ENCODE measurements at regions of chr5 and their contacts with region 1.

Region 1: DNA sequence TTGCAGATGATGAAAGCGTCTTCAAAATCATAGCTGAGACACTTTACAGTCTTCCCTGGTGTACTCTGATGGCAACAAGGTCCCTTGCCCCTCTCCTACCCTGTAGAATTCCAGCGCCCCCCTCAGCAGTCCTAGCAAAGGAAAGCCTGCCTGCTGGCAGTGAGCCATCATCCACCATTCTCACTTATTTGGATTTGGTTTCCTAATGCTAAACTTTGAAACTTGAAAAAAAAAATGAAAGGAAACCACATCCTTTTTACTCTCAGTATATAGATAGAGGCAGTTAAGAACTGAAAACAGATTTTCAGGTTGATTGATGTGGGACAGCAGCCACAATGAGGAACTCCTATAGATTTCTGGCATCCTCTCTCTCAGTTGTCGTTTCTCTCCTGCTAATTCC is at the start of gene GZMA:
- DNase-seq: peak in 8 of 9 donors; percentile 47 to 86 (median 80)
- ATAC-seq: peak; percentile 87
- H3K4me3 ChIP-seq: peak within 1 kb of the TSS; percentile 66
- H3K4me3 Mint-ChIP-seq: peak within 1 kb of the TSS; percentile 83 to 93 (median 89)
- H3K27ac ChIP-seq: peak within 1 kb of the TSS; percentile 21
- H3K27ac Mint-ChIP-seq: peak within 1 kb of the TSS; percentile 77 to 93 (median 90)
- H3K4me1 ChIP-seq: peaks cover 42 to 47% of the 10 kb centered on the region in 2 donors
- H3K4me1 Mint-ChIP-seq: peaks cover 44 to 92% (median 80%) of the 10 kb centered on the region in 7 donors
- H3K27me3 ChIP-seq: no peaks in the 10 kb centered on the region
- H3K27me3 Mint-ChIP-seq: no peaks in the 10 kb centered on the region
- total RNA-seq, gene GZMA: 2.0 to 1,076 (median 10.9) TPM

Region 2: DNA sequence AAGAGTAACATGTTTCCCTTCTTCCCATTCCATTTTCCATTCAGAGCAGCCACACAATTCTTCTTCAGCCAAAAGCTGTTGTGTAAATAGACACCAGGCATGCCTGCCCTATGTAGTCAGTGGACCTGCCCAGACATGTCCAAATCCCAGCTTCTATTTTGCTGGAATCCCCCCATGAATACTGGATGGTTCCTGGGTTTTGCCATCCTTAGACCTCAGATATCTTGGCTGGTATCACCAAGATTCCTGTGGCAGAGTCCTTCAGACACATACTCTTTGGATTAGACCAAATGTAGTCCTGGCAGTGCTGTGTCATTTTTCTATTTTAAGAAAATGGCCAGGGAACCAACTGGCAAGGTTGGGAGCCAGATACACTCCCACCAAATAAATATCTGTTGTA is 1611.6 kb before region 1 on chr5:
- CTCF ChIA-PET with region 1: no interaction called
- POLR2A ChIA-PET with region 1: no interaction called
- intact Hi-C with region 1: no loop called
- DNase-seq: no peak
- ATAC-seq: no peak
- H3K4me3 ChIP-seq: no peak overlapping the region
- H3K4me3 Mint-ChIP-seq: no peak overlapping the region
- H3K27ac ChIP-seq: no peak overlapping the region
- H3K27ac Mint-ChIP-seq: no peak overlapping the region
- H3K4me1 ChIP-seq: no peaks in the 10 kb centered on the region
- H3K4me1 Mint-ChIP-seq: peaks cover 0 to 1% (median 0%) of the 10 kb centered on the region in 7 donors
- H3K27me3 ChIP-seq: no peaks in the 10 kb centered on the region
- H3K27me3 Mint-ChIP-seq: peaks cover 20 to 58% (median 45%) of the 10 kb centered on the region in 5 donors

Region 3: GRCh38 chr5:54905943-54906537 is 196.3 kb before region 1 on chr5:
- CTCF ChIA-PET with region 1: interaction called, 4 read pairs
- POLR2A ChIA-PET with region 1: no interaction called
- intact Hi-C with region 1: loop called (anchors 1 to 2 kb)
- DNase-seq: peak; percentile 26 to 65 (median 53)
- ATAC-seq: peak; percentile 55
- H3K4me3 ChIP-seq: no peak overlapping the region
- H3K4me3 Mint-ChIP-seq: no peak overlapping the region
- H3K27ac ChIP-seq: no peak overlapping the region
- H3K27ac Mint-ChIP-seq: no peak overlapping the region
- H3K4me1 ChIP-seq: peaks cover 0 to 10% of the 10 kb centered on the region in 2 donors
- H3K4me1 Mint-ChIP-seq: peaks cover 6 to 64% (median 10%) of the 10 kb centered on the region in 7 donors
- H3K27me3 ChIP-seq: no peaks in the 10 kb centered on the region
- H3K27me3 Mint-ChIP-seq: peaks cover 0 to 51% (median 6%) of the 10 kb centered on the region in 5 donors

Region 4: GRCh38 chr5:54985301-54986268 is 116.8 kb before region 1 on chr5 and contains the start of gene ESM1:
- CTCF ChIA-PET with region 1: no interaction called
- POLR2A ChIA-PET with region 1: no interaction called
- intact Hi-C with region 1: loop called in 1 of 2 experiments (anchors 5 kb)
- DNase-seq: peak in 1 of 9 donors; percentile 5
- ATAC-seq: peak; percentile 36
- H3K4me3 ChIP-seq: no peak within 1 kb of the TSS
- H3K4me3 Mint-ChIP-seq: peak within 1 kb of the TSS; percentile 11 to 68 (median 47)
- H3K27ac ChIP-seq: no peak within 1 kb of the TSS
- H3K27ac Mint-ChIP-seq: peak within 1 kb of the TSS in 2 of 9 donors; percentile 52 to 77
- H3K4me1 ChIP-seq: peaks cover 15 to 37% of the 10 kb centered on the region in 2 donors
- H3K4me1 Mint-ChIP-seq: peaks cover 18 to 65% (median 54%) of the 10 kb centered on the region in 7 donors
- H3K27me3 ChIP-seq: no peaks in the 10 kb centered on the region
- H3K27me3 Mint-ChIP-seq: peaks cover 0 to 36% (median 4%) of the 10 kb centered on the region in 5 donors
- total RNA-seq, gene ESM1: 0.39 to 1.2 TPM in 2 of 5 experiments, not detected in the others

Region 5: GRCh38 chr5:55037046-55037771 is 65.1 kb before region 1 on chr5:
- CTCF ChIA-PET with region 1: interaction called, 10 read pairs
- POLR2A ChIA-PET with region 1: interaction called, 11 read pairs
- intact Hi-C with region 1: loop called (anchors 1 to 2 kb)
- DNase-seq: peak in 8 of 9 donors; percentile 10 to 69 (median 50)
- ATAC-seq: peak; percentile 89
- H3K4me3 ChIP-seq: no peak overlapping the region
- H3K4me3 Mint-ChIP-seq: peak overlapping the region; percentile 6 to 55 (median 48)
- H3K27ac ChIP-seq: peak overlapping the region; percentile 49
- H3K27ac Mint-ChIP-seq: peak overlapping the region; percentile 55 to 99 (median 86)
- H3K4me1 ChIP-seq: peaks cover 17 to 31% of the 10 kb centered on the region in 2 donors
- H3K4me1 Mint-ChIP-seq: peaks cover 11 to 53% (median 32%) of the 10 kb centered on the region in 7 donors
- H3K27me3 ChIP-seq: no peaks in the 10 kb centered on the region
- H3K27me3 Mint-ChIP-seq: no peaks in the 10 kb centered on the region

Region 6: DNA sequence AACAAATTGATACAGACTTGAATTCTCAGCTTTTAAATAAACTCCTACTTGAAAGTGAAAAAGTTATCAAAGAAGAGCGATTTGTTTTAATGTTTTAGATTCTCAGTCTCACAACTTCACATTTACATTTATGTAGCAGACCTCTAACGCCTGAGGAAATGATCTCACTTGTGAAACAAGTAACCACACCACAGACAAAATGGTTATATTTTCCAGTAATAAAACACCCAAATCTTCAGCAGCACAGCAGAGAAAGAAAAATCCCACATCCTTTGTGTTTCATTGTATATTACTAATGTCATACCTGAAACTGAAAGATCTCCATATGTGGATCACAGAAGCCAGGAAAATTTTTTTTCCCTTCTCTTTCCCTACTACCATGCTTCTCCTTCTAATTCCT is 29.7 kb before region 1 on chr5:
- CTCF ChIA-PET with region 1: interaction called, 3 read pairs
- POLR2A ChIA-PET with region 1: interaction called, 11 read pairs
- intact Hi-C with region 1: loop called (anchors 1 kb)
- DNase-seq: peak in 7 of 9 donors; percentile 48 to 81 (median 70)
- ATAC-seq: peak; percentile 90
- H3K4me3 ChIP-seq: peak overlapping the region; percentile 28
- H3K4me3 Mint-ChIP-seq: peak overlapping the region; percentile 22 to 77 (median 60)
- H3K27ac ChIP-seq: peak overlapping the region; percentile 40
- H3K27ac Mint-ChIP-seq: peak overlapping the region; percentile 47 to 95 (median 69)
- H3K4me1 ChIP-seq: peaks cover 27 to 35% of the 10 kb centered on the region in 2 donors
- H3K4me1 Mint-ChIP-seq: peaks cover 15 to 54% (median 43%) of the 10 kb centered on the region in 7 donors
- H3K27me3 ChIP-seq: no peaks in the 10 kb centered on the region
- H3K27me3 Mint-ChIP-seq: no peaks in the 10 kb centered on the region

Region 7: GRCh38 chr5:55146543-55147151 is 44.3 kb after region 1 on chr5:
- CTCF ChIA-PET with region 1: interaction called, 25 read pairs
- POLR2A ChIA-PET with region 1: interaction called, 3 read pairs
- intact Hi-C with region 1: loop called (anchors 1 kb)
- DNase-seq: peak; percentile 47 to 84 (median 77)
- ATAC-seq: peak; percentile 91
- H3K4me3 ChIP-seq: no peak overlapping the region
- H3K4me3 Mint-ChIP-seq: peak overlapping the region in 7 of 10 donors; percentile 21 to 74 (median 42)
- H3K27ac ChIP-seq: no peak overlapping the region
- H3K27ac Mint-ChIP-seq: peak overlapping the region in 6 of 9 donors; percentile 1 to 60 (median 27)
- H3K4me1 ChIP-seq: peaks cover 5 to 14% of the 10 kb centered on the region in 2 donors
- H3K4me1 Mint-ChIP-seq: peaks cover 12 to 38% (median 20%) of the 10 kb centered on the region in 7 donors
- H3K27me3 ChIP-seq: no peaks in the 10 kb centered on the region
- H3K27me3 Mint-ChIP-seq: peaks cover 0 to 62% (median 0%) of the 10 kb centered on the region in 5 donors